ENCODE measurements at regions of chr15 and their contacts with region 1.

Region 1: DNA sequence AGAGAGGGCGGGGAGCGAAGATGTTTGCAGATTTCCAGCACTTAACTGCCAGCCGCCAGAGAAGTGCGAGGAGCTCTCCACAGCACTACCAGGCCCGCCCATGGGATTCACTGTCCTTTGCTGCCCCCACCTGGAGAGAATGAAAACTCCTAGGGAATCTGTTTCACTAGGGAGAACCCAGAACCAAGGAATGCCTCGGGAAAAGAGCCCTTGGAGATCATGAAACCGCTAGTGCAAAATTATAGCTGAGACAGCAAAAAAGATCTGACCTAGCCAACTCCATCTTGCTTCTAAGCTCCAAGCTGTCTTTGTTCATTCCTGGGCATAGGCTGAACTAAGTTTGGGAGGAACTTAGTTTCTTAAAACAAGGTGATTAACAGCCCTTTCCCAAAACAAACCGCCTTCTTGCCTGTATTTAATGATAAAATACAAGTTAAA is 82.6 kb upstream of the GCNT3 start:
- DNase-seq: peak; percentile 84
- H3K4me3 Mint-ChIP-seq: no peak overlapping the region
- H3K27ac Mint-ChIP-seq: no peak overlapping the region
- H3K4me1 Mint-ChIP-seq: peaks cover 17% of the 10 kb centered on the region
- H3K27me3 Mint-ChIP-seq: no peaks in the 10 kb centered on the region

Region 2: GRCh38 chr15:59247364-59247763 is 281.6 kb before region 1 on chr15:
- CTCF ChIA-PET with region 1: interaction called, 4 read pairs
- intact Hi-C with region 1: loop called (anchors 2 kb)
- DNase-seq: peak; percentile 71
- H3K4me3 Mint-ChIP-seq: no peak overlapping the region
- H3K27ac Mint-ChIP-seq: no peak overlapping the region
- H3K4me1 Mint-ChIP-seq: no peaks in the 10 kb centered on the region
- H3K27me3 Mint-ChIP-seq: no peaks in the 10 kb centered on the region

Region 3: GRCh38 chr15:59501597-59501996 is 27.4 kb before region 1 on chr15:
- CTCF ChIA-PET with region 1: interaction called, 12 read pairs
- intact Hi-C with region 1: no loop called
- DNase-seq: peak; percentile 36
- H3K4me3 Mint-ChIP-seq: no peak overlapping the region
- H3K27ac Mint-ChIP-seq: no peak overlapping the region
- H3K4me1 Mint-ChIP-seq: no peaks in the 10 kb centered on the region
- H3K27me3 Mint-ChIP-seq: no peaks in the 10 kb centered on the region

Region 4: GRCh38 chr15:59543721-59544547 is 14.9 kb after region 1 on chr15:
- CTCF ChIA-PET with region 1: interaction called, 11 read pairs
- intact Hi-C with region 1: no loop called
- DNase-seq: peak; percentile 33
- H3K4me3 Mint-ChIP-seq: no peak overlapping the region
- H3K27ac Mint-ChIP-seq: no peak overlapping the region
- H3K4me1 Mint-ChIP-seq: peaks cover 11% of the 10 kb centered on the region
- H3K27me3 Mint-ChIP-seq: peaks cover 2% of the 10 kb centered on the region

Region 5: GRCh38 chr15:59622289-59622688 is 93.3 kb after region 1 on chr15:
- CTCF ChIA-PET with region 1: interaction called, 20 read pairs
- intact Hi-C with region 1: loop called (anchors 1 kb)
- DNase-seq: peak; percentile 73
- H3K4me3 Mint-ChIP-seq: no peak overlapping the region
- H3K27ac Mint-ChIP-seq: no peak overlapping the region
- H3K4me1 Mint-ChIP-seq: no peaks in the 10 kb centered on the region
- H3K27me3 Mint-ChIP-seq: peaks cover 8% of the 10 kb centered on the region

Region 6: GRCh38 chr15:59642351-59642750 is 113.4 kb after region 1 on chr15:
- CTCF ChIA-PET with region 1: interaction called, 13 read pairs
- intact Hi-C with region 1: loop called (anchors 5 kb)
- DNase-seq: no peak
- H3K4me3 Mint-ChIP-seq: no peak overlapping the region
- H3K27ac Mint-ChIP-seq: peak overlapping the region; percentile 35
- H3K4me1 Mint-ChIP-seq: peaks cover 20% of the 10 kb centered on the region
- H3K27me3 Mint-ChIP-seq: no peaks in the 10 kb centered on the region

Region 7: GRCh38 chr15:60326824-60327654 is 798.1 kb after region 1 on chr15:
- CTCF ChIA-PET with region 1: no interaction called
- intact Hi-C with region 1: loop called (anchors 2 kb)
- DNase-seq: peak; percentile 54
- H3K4me3 Mint-ChIP-seq: no peak overlapping the region
- H3K27ac Mint-ChIP-seq: no peak overlapping the region
- H3K4me1 Mint-ChIP-seq: peaks cover 2% of the 10 kb centered on the region
- H3K27me3 Mint-ChIP-seq: peaks cover 20% of the 10 kb centered on the region

Measured in activated naive CD4-positive, alpha-beta T cell treated with anti-CD3 and anti-CD28 coated beads for 36 hours (primary cell).